ENCODE measurements at regions of chr2 and their contacts with region 1.

Region 1: GRCh38 chr2:217510771-217511291 is 492.0 kb downstream of the TNS1 start:
- DNase-seq: peak; percentile 18
- H3K4me3 ChIP-seq: no peak overlapping the region
- H3K27ac ChIP-seq: no peak overlapping the region
- H3K4me1 ChIP-seq: peaks cover 29% of the 10 kb centered on the region
- H3K27me3 ChIP-seq: no peaks in the 10 kb centered on the region
- CTCF ChIP-seq: peak; percentile 83

Region 2: DNA sequence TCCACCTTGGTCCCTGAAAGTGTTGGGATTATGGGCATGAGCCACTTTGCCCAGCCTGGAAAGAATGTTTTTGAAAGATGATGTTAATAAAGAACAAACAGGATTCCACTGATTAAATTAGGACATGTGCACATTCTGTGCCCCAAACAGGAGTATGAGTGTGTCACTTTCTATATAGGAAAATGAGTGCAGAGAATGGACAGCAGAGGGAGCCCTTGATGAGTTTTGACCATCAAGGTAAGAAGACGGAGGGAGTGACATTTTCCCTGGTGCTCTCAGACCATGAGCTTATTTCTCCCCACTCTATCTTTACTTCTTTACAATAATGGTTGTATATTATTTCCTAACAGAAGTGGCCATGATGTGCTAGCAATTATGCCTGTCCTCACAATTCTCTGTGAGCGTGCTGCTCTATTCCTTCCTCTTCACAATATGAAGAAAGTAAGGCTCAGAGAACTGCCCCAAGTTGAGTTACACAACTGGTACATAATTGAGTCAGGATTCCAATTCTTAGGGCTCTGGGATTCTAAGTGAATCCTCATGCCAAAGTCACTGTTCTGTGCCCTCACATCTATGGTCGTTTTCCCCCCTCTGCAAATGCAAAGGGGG is 991.6 kb before region 1 on chr2:
- intact Hi-C with region 1: loop called (anchors 10 kb)
- DNase-seq: no peak
- H3K4me3 ChIP-seq: no peak overlapping the region
- H3K27ac ChIP-seq: no peak overlapping the region
- H3K4me1 ChIP-seq: peaks cover 11% of the 10 kb centered on the region
- H3K27me3 ChIP-seq: no peaks in the 10 kb centered on the region
- CTCF ChIP-seq: peak; percentile 85

Region 3: GRCh38 chr2:216683846-216684507 is 826.9 kb before region 1 on chr2:
- intact Hi-C with region 1: loop called (anchors 5 kb)
- DNase-seq: no peak
- H3K4me3 ChIP-seq: no peak overlapping the region
- H3K27ac ChIP-seq: peak overlapping the region; percentile 92
- H3K4me1 ChIP-seq: peaks cover 98% of the 10 kb centered on the region
- H3K27me3 ChIP-seq: no peaks in the 10 kb centered on the region
- CTCF ChIP-seq: no peak

Region 4: GRCh38 chr2:216698895-216699294 is 811.9 kb before region 1 on chr2:
- intact Hi-C with region 1: loop called (anchors 5 kb)
- DNase-seq: no peak
- H3K4me3 ChIP-seq: no peak overlapping the region
- H3K27ac ChIP-seq: peak overlapping the region; percentile 94
- H3K4me1 ChIP-seq: peaks cover 86% of the 10 kb centered on the region
- H3K27me3 ChIP-seq: peaks cover 8% of the 10 kb centered on the region
- CTCF ChIP-seq: peak; percentile 76

Region 5: DNA sequence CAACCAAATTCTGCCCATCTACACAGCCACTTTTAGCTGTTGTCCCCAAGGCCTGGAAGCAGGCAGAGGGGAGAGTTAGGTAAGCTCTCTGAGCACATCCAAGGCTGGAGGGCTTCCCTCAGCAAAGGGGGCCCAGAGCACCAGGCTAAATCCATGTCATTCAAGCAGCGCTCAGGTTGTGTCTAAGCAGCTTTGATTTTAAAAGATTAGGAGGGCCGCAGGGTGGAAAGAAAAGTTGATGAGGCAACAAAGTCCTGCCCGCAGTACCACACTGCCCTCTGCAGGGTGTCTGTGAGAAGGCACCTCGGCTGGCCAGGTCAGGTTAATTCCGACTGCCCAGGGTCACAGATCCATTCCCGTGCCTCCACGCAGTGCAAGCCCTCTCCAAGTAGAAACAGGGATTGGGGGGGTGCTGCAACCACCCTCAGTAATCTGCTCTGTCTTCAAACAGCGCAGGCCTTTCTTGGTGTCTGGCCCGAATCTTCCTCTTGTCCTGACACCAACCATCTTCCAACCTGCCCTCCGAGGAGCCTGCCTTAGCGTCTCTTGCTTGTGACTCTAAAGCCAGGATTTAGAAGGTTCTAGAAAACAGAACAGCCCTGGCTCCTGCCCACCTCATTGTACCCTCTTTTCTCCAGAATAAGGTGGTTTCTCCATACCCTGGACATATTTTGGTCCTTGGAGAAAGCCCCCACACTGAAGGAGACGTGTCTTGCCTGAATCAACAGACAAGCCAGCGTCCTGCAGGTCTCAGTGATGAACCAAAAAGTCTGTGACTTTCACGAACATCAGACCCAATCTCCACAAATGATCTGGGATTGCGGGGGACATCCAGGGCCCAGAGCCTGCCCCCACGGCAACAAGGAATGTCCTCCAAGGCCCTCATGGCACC is 202.8 kb after region 1 on chr2:
- intact Hi-C with region 1: loop called (anchors 10 kb)
- DNase-seq: peak; percentile 81
- H3K4me3 ChIP-seq: no peak overlapping the region
- H3K27ac ChIP-seq: peak overlapping the region; percentile 74
- H3K4me1 ChIP-seq: peaks cover 23% of the 10 kb centered on the region
- H3K27me3 ChIP-seq: no peaks in the 10 kb centered on the region
- CTCF ChIP-seq: peak; percentile 99

Measured in left ventricle myocardium inferior (tissue), 1 donor.